ENCODE measurements at regions of chr4 and their contacts with region 1.

Region 1: GRCh38 chr4:99885063-99885664 is 9.1 kb downstream of the LAMTOR3 start:
- DNase-seq: no peak
- ATAC-seq: peak; percentile 80
- H3K4me3 ChIP-seq: no peak overlapping the region
- H3K27ac ChIP-seq: no peak overlapping the region
- H3K4me1 ChIP-seq: no peaks in the 10 kb centered on the region
- H3K27me3 ChIP-seq: no peaks in the 10 kb centered on the region
- CTCF ChIP-seq: peak; percentile 47 to 75 (median 49); a peak in 4 of 6 replicates
- EP300 ChIP-seq: no peak
- POLR2A ChIP-seq: no peak
- RAD21 ChIP-seq: peak; percentile 85

Region 2: GRCh38 chr4:99529228-99529627 is 355.9 kb before region 1 on chr4:
- CTCF ChIA-PET with region 1: no interaction called
- POLR2A ChIA-PET with region 1: no interaction called
- RAD21 ChIA-PET with region 1: no interaction called
- SMC1A ChIA-PET with region 1: no interaction called
- in situ Hi-C with region 1: no loop called
- intact Hi-C with region 1: no loop called
- DNase-seq: no peak
- ATAC-seq: no peak
- H3K4me3 ChIP-seq: no peak overlapping the region
- H3K27ac ChIP-seq: no peak overlapping the region
- H3K4me1 ChIP-seq: no peaks in the 10 kb centered on the region
- H3K27me3 ChIP-seq: no peaks in the 10 kb centered on the region
- CTCF ChIP-seq: no peak
- EP300 ChIP-seq: no peak
- POLR2A ChIP-seq: no peak
- RAD21 ChIP-seq: no peak

Region 3: GRCh38 chr4:99723612-99724011 is 161.6 kb before region 1 on chr4:
- CTCF ChIA-PET with region 1: no interaction called
- POLR2A ChIA-PET with region 1: no interaction called
- RAD21 ChIA-PET with region 1: no interaction called
- SMC1A ChIA-PET with region 1: no interaction called
- in situ Hi-C with region 1: no loop called
- intact Hi-C with region 1: loop called (anchors 10 kb)
- DNase-seq: no peak
- ATAC-seq: no peak
- H3K4me3 ChIP-seq: no peak overlapping the region
- H3K27ac ChIP-seq: no peak overlapping the region
- H3K4me1 ChIP-seq: no peaks in the 10 kb centered on the region
- H3K27me3 ChIP-seq: no peaks in the 10 kb centered on the region
- CTCF ChIP-seq: no peak
- EP300 ChIP-seq: no peak
- POLR2A ChIP-seq: no peak
- RAD21 ChIP-seq: no peak

Region 4: DNA sequence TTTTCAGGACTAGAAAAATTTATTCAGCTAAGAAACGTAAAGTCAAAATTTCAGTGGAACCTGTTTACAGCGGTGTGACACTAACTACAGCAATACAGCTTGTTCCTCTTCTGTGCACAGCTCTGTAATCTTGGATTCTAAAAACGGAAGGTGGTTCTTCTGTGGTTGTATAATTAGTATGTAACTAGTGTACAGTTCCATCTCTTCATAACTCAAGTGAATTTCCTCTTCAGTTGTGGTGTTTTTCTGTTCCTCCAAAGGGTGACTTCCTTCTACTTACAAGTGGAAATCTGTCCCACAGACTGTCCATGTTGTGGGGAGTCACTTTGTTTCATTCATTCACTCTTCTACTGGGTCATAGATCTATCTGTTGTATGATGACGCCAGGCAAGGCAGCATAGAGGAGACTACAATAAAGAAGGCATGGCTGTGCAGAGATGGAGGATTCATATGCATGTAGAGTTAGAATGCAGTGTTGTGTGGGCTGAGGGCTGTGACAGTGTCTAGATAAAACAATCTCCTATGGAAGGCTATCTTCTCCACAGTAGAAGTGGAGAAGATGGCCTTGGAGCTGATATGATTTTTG is 63.2 kb before region 1 on chr4:
- CTCF ChIA-PET with region 1: interaction called, 11 read pairs
- POLR2A ChIA-PET with region 1: interaction called, 3 read pairs
- RAD21 ChIA-PET with region 1: interaction called, 14 read pairs
- SMC1A ChIA-PET with region 1: interaction called, 8 read pairs
- in situ Hi-C with region 1: no loop called
- intact Hi-C with region 1: no loop called
- DNase-seq: peak; percentile 59
- ATAC-seq: peak; percentile 73
- H3K4me3 ChIP-seq: peak overlapping the region; percentile 59; the same call in 1 of the 2 replicates
- H3K27ac ChIP-seq: peak overlapping the region; percentile 70
- H3K4me1 ChIP-seq: peaks cover 17% of the 10 kb centered on the region; the same call in 1 of the 2 replicates
- H3K27me3 ChIP-seq: no peaks in the 10 kb centered on the region
- CTCF ChIP-seq: no peak
- EP300 ChIP-seq: no peak
- POLR2A ChIP-seq: no peak
- RAD21 ChIP-seq: no peak

Region 5: GRCh38 chr4:99855678-99856077 is 29.5 kb before region 1 on chr4:
- CTCF ChIA-PET with region 1: interaction called, 14 read pairs
- POLR2A ChIA-PET with region 1: no interaction called
- RAD21 ChIA-PET with region 1: no interaction called
- SMC1A ChIA-PET with region 1: interaction called, 4 read pairs
- in situ Hi-C with region 1: no loop called
- intact Hi-C with region 1: no loop called
- DNase-seq: peak; percentile 53
- ATAC-seq: peak; percentile 28
- H3K4me3 ChIP-seq: no peak overlapping the region
- H3K27ac ChIP-seq: peak overlapping the region; percentile 58; the same call in 1 of the 2 replicates
- H3K4me1 ChIP-seq: peaks cover 43% of the 10 kb centered on the region
- H3K27me3 ChIP-seq: no peaks in the 10 kb centered on the region
- CTCF ChIP-seq: no peak
- EP300 ChIP-seq: 0 out of 4 replicates have a peak, but pooled peaks of 1 of the 2 experiments have one; percentile 9
- POLR2A ChIP-seq: no peak
- RAD21 ChIP-seq: no peak

Measured in GM12878 (cell line).